Right cardiac atrium (tissue), 5 donors: ENCODE measurements at regions of chr20 and their contacts with region 1.

Region 1: GRCh38 chr20:20520776-20521175 is 152.9 kb downstream of the INSM1 start:
- DNase-seq: no peak
- ATAC-seq: no peak
- H3K4me3 ChIP-seq: no peak overlapping the region
- H3K27ac ChIP-seq: no peak overlapping the region
- H3K4me1 ChIP-seq: no peaks in the 10 kb centered on the region
- H3K27me3 ChIP-seq: no peaks in the 10 kb centered on the region

Region 2: GRCh38 chr20:19867940-19868371 is 652.8 kb before region 1 on chr20:
- intact Hi-C with region 1: no loop called
- DNase-seq: peak in 2 of 3 donors; percentile 63 to 67
- ATAC-seq: no peak
- H3K4me3 ChIP-seq: no peak overlapping the region
- H3K27ac ChIP-seq: peak overlapping the region; percentile 1
- H3K4me1 ChIP-seq: peaks cover 1% of the 10 kb centered on the region
- H3K27me3 ChIP-seq: no peaks in the 10 kb centered on the region

Region 3: GRCh38 chr20:20466341-20466879 is 54.4 kb before region 1 on chr20:
- intact Hi-C with region 1: loop called in 1 of 4 experiments (anchors 10 kb)
- DNase-seq: no peak
- ATAC-seq: peak; percentile 66 to 85
- H3K4me3 ChIP-seq: no peak overlapping the region
- H3K27ac ChIP-seq: no peak overlapping the region
- H3K4me1 ChIP-seq: peaks cover 3% of the 10 kb centered on the region
- H3K27me3 ChIP-seq: no peaks in the 10 kb centered on the region